ENCODE measurements at regions of chr11 and their contacts with region 1.

Region 1: GRCh38 chr11:3797329-3798095 is at the start of gene NUP98:
- DNase-seq: peak; percentile 96 to 100 (median 100)
- ATAC-seq: peak; percentile 95
- H3K4me3 ChIP-seq: peak within 1 kb of the TSS; percentile 96
- H3K4me3 Mint-ChIP-seq: peak within 1 kb of the TSS; percentile 87 to 98 (median 96)
- H3K27ac ChIP-seq: peak within 1 kb of the TSS; percentile 99
- H3K27ac Mint-ChIP-seq: peak within 1 kb of the TSS; percentile 98 to 100 (median 99)
- H3K4me1 ChIP-seq: peaks cover 25 to 27% of the 10 kb centered on the region in 2 donors
- H3K4me1 Mint-ChIP-seq: peaks cover 11 to 61% (median 51%) of the 10 kb centered on the region in 7 donors
- H3K27me3 ChIP-seq: no peaks in the 10 kb centered on the region
- H3K27me3 Mint-ChIP-seq: peaks cover 0 to 2% (median 0%) of the 10 kb centered on the region in 5 donors
- total RNA-seq, gene NUP98: 103 to 137 (median 120) TPM

Region 2: DNA sequence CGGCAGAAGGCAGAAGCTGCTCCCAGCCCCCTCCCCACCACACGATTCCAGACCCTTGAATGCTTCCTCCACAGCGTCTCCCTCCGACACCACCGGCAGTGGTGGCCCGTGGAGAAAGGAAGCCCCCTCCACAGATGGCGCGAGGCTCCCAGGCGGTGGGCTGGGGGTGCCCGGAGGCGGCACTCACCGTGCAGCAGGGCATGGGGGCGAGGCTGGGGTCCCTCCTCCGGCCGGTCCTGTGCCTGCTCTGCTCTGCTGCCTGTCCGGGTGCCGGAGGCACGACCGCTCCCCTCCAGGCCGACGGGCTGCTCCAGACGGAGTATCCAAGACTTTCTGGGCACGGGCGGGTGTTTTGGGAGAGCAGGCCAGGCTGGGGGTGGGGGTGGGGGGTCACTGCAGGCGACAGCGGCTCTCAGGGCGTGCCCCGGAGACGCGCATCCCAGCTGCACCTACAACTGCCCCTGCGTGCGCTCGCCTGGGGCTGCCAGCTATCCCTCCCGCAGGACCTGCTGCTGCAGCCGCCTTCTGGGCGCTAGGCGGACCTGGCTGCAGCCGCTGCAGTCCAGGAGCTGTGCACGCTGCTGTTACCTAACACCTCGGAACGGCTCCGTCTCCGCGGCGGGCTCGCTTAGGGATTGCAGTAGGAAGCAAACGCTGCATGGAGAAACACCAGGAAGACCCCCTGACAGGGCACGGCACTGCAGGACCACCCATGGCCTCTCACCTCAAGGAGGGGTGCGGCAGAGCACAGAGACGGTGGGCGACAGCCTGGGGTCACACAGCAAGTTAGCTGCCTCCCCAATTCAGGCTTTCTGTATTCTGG is 594.1 kb before region 1 on chr11:
- CTCF ChIA-PET with region 1: no interaction called
- POLR2A ChIA-PET with region 1: no interaction called
- intact Hi-C with region 1: no loop called
- DNase-seq: no peak
- ATAC-seq: no peak
- H3K4me3 ChIP-seq: no peak overlapping the region
- H3K4me3 Mint-ChIP-seq: peak overlapping the region in 1 of 10 donors; percentile 73
- H3K27ac ChIP-seq: no peak overlapping the region
- H3K27ac Mint-ChIP-seq: no peak overlapping the region
- H3K4me1 ChIP-seq: no peaks in the 10 kb centered on the region
- H3K4me1 Mint-ChIP-seq: peaks cover 0 to 17% (median 4%) of the 10 kb centered on the region in 7 donors
- H3K27me3 ChIP-seq: no peaks in the 10 kb centered on the region
- H3K27me3 Mint-ChIP-seq: peaks cover 7 to 28% (median 17%) of the 10 kb centered on the region in 5 donors

Region 3: GRCh38 chr11:3781423-3781822 is 16.1 kb before region 1 on chr11:
- CTCF ChIA-PET with region 1: interaction called, 3 read pairs
- POLR2A ChIA-PET with region 1: interaction called, 7 read pairs
- intact Hi-C with region 1: loop called (anchors 1 kb)
- DNase-seq: no peak
- ATAC-seq: no peak
- H3K4me3 ChIP-seq: no peak overlapping the region
- H3K4me3 Mint-ChIP-seq: peak overlapping the region in 2 of 10 donors; percentile 21 to 51
- H3K27ac ChIP-seq: no peak overlapping the region
- H3K27ac Mint-ChIP-seq: peak overlapping the region in 7 of 9 donors; percentile 11 to 95 (median 72)
- H3K4me1 ChIP-seq: peaks cover 16 to 20% of the 10 kb centered on the region in 2 donors
- H3K4me1 Mint-ChIP-seq: peaks cover 21 to 56% (median 51%) of the 10 kb centered on the region in 7 donors
- H3K27me3 ChIP-seq: no peaks in the 10 kb centered on the region
- H3K27me3 Mint-ChIP-seq: no peaks in the 10 kb centered on the region

Region 4: DNA sequence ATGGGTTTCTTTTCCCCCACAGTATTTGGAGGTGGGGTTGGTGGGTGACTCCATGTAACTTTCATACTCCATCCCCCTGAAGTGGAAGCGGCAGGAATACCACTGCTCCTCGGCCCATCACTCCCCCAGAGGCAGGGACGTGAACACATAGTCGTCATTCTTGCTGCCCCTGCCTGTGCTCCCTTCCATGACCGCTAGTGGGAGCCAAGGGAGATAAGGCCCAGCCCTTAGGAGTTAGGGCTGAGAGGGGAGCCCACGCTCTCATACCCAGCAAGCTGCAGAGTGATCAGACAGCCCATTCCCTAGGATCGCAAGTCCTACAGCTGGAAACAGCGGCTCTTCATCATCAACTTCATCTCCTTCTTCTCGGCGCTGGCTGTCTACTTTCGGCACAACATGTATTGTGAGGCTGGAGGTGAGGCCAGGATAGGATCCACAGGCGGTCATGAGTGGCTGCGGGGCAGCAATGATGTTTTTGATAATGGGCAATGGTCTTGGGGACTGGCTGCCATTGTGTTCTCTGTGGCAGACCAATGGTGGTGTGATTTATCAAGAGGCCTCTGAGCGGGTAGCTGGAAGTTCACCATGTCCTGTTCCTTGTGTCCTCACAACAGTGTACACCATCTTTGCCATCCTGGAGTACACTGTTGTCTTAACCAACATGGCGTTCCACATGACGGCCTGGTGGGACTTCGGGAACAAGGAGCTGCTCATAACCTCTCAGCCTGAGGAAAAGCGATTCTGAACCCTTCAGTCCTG is 27.4 kb after region 1 on chr11:
- CTCF ChIA-PET with region 1: no interaction called
- POLR2A ChIA-PET with region 1: interaction called, 3 read pairs
- intact Hi-C with region 1: loop called in 1 of 2 experiments (anchors 2 kb)
- DNase-seq: peak; percentile 65 to 83 (median 77)
- ATAC-seq: peak; percentile 97
- H3K4me3 ChIP-seq: no peak overlapping the region
- H3K4me3 Mint-ChIP-seq: no peak overlapping the region
- H3K27ac ChIP-seq: peak overlapping the region; percentile 38
- H3K27ac Mint-ChIP-seq: peak overlapping the region; percentile 60 to 96 (median 87)
- H3K4me1 ChIP-seq: peaks cover 13 to 14% of the 10 kb centered on the region in 2 donors
- H3K4me1 Mint-ChIP-seq: peaks cover 15 to 46% (median 44%) of the 10 kb centered on the region in 7 donors
- H3K27me3 ChIP-seq: no peaks in the 10 kb centered on the region
- H3K27me3 Mint-ChIP-seq: no peaks in the 10 kb centered on the region

Region 5: DNA sequence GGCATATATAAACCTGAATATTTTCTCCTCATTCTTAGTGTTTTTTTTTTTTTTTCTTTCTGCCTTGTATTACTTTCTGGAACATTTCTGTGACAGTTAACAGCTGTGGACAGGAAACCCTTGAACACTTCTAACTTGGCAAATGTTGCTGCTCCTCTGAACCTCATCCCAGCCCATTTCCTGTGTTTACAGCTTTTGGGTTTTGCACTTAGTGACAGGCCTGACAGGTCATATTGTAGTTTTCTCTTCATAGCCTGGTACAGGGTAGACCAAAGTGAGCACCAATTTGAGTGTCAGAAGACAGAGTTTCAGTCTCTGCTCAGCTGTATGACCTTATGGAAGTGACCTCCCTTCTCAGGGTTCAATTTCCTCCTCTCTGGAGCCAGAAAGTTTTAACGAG is 149.5 kb after region 1 on chr11:
- CTCF ChIA-PET with region 1: no interaction called
- POLR2A ChIA-PET with region 1: no interaction called
- intact Hi-C with region 1: loop called in 1 of 2 experiments (anchors 1 kb)
- DNase-seq: peak in 8 of 9 donors; percentile 36 to 86 (median 80)
- ATAC-seq: peak; percentile 88
- H3K4me3 ChIP-seq: peak overlapping the region; percentile 44
- H3K4me3 Mint-ChIP-seq: peak overlapping the region; percentile 52 to 88 (median 80)
- H3K27ac ChIP-seq: peak overlapping the region; percentile 65
- H3K27ac Mint-ChIP-seq: peak overlapping the region; percentile 93 to 99 (median 97)
- H3K4me1 ChIP-seq: peaks cover 93 to 95% of the 10 kb centered on the region in 2 donors
- H3K4me1 Mint-ChIP-seq: peaks cover 84 to 98% (median 97%) of the 10 kb centered on the region in 7 donors
- H3K27me3 ChIP-seq: no peaks in the 10 kb centered on the region
- H3K27me3 Mint-ChIP-seq: no peaks in the 10 kb centered on the region

Measured in naive thymus-derived CD4-positive, alpha-beta T cell (primary cell).